Activated CD4-positive, alpha-beta T cell treated with anti-CD3 and anti-CD28 coated beads for 36 hours (primary cell): ENCODE measurements at regions of chr10 and their contacts with region 1.

Region 1: DNA sequence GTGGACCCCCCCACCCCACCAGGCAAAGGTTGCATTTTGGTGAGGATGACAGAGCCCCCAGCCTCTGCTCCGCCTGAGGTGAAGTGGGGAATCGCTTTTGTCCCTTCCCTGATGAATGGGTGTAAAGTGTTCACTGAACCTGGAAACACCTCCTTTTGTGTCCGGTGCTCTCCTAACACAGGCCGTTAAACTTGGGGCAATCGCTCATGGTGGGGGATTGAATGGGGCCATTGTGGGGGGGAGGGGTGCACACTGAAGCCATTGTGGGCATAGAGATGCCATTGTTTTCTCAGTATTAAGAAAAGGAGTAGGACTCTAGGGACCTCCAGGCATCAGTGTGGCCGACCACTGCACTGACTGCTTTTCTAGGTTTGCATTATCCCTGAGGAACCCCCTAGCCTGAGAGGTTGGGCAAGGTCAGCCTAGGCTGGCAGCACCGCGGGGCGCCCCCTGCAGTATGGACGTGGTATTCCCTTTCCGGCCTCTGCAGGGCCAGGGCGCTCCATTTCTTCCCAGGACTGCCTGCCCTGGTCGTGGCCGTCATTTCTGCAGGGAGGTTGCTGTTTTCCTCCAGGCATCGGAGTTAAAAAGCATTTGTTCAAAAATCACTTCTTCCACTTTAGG is 158.3 kb downstream of the TCF7L2 start:
- DNase-seq: peak; percentile 63
- ATAC-seq: peak; percentile 55
- H3K4me3 Mint-ChIP-seq: no peak overlapping the region
- H3K27ac Mint-ChIP-seq: no peak overlapping the region
- H3K4me1 Mint-ChIP-seq: no peaks in the 10 kb centered on the region
- H3K27me3 Mint-ChIP-seq: peaks cover 3% of the 10 kb centered on the region

Region 2: GRCh38 chr10:112565434-112566053 is 542.8 kb before region 1 on chr10:
- CTCF ChIA-PET with region 1: no interaction called
- POLR2A ChIA-PET with region 1: no interaction called
- intact Hi-C with region 1: loop called in 1 of 2 experiments (anchors 5 kb)
- DNase-seq: peak; percentile 22
- ATAC-seq: peak; percentile 49
- H3K4me3 Mint-ChIP-seq: no peak overlapping the region
- H3K27ac Mint-ChIP-seq: no peak overlapping the region
- H3K4me1 Mint-ChIP-seq: no peaks in the 10 kb centered on the region
- H3K27me3 Mint-ChIP-seq: no peaks in the 10 kb centered on the region

Region 3: GRCh38 chr10:113093188-113094113 is 14.9 kb before region 1 on chr10:
- CTCF ChIA-PET with region 1: no interaction called
- POLR2A ChIA-PET with region 1: no interaction called
- intact Hi-C with region 1: no loop called
- DNase-seq: no peak
- ATAC-seq: peak; percentile 57
- H3K4me3 Mint-ChIP-seq: no peak overlapping the region
- H3K27ac Mint-ChIP-seq: peak overlapping the region; percentile 48
- H3K4me1 Mint-ChIP-seq: peaks cover 17% of the 10 kb centered on the region
- H3K27me3 Mint-ChIP-seq: no peaks in the 10 kb centered on the region